ENCODE measurements at regions of chr11 and their contacts with region 1.

Region 1: GRCh38 chr11:76761718-76762355 is 21.3 kb upstream of the TSKU start:
- DNase-seq: no peak
- ATAC-seq: no peak
- H3K4me3 ChIP-seq: no peak overlapping the region
- H3K4me3 Mint-ChIP-seq: no peak overlapping the region
- H3K27ac ChIP-seq: no peak overlapping the region
- H3K27ac Mint-ChIP-seq: no peak overlapping the region
- H3K4me1 ChIP-seq: peaks cover 0 to 3% of the 10 kb centered on the region in 2 experiments
- H3K4me1 Mint-ChIP-seq: peaks cover 0 to 1% (median under 1%) of the 10 kb centered on the region in 3 donors
- H3K27me3 ChIP-seq: peaks cover 0 to 19% of the 10 kb centered on the region in 2 experiments
- H3K27me3 Mint-ChIP-seq: peaks cover 0 to 3% of the 10 kb centered on the region in 2 donors

Region 2: DNA sequence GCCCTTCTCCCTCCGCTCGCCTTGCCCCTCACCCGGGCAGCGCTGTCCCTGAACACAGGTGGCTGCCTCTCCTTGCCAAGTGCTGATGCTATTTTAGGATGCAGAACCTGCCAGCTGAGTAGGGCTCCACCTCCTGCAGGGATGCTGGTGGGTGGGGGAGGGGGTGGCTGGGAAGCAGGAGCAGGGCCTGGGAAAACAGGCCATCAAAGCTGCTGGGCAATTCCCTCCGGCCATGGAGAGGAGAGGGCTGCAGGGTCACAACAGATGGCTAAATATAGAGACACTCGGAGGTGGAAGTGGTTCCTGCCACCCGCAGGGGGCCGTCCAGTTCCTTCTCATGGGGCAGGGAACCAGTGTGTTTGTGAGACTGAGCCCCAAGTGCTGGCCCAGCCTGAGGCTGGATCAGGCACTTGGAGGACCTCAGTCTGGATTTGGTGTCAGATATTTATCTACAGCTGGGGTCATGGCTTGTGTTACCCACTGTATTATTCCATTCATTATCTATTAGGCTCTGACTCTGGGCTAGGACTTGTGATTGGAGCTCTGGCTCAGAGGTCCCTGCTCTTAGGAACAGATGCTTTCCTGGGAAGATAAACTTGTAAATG is 150.9 kb before region 1 on chr11:
- CTCF ChIA-PET with region 1: no interaction called
- POLR2A ChIA-PET with region 1: no interaction called
- DNase-seq: no peak
- ATAC-seq: no peak
- H3K4me3 ChIP-seq: no peak overlapping the region
- H3K4me3 Mint-ChIP-seq: no peak overlapping the region
- H3K27ac ChIP-seq: no peak overlapping the region
- H3K27ac Mint-ChIP-seq: no peak overlapping the region
- H3K4me1 ChIP-seq: no peaks in the 10 kb centered on the region
- H3K4me1 Mint-ChIP-seq: no peaks in the 10 kb centered on the region
- H3K27me3 ChIP-seq: peaks cover 0 to 18% of the 10 kb centered on the region in 2 experiments
- H3K27me3 Mint-ChIP-seq: peaks cover 0 to 2% of the 10 kb centered on the region in 2 donors

Region 3: DNA sequence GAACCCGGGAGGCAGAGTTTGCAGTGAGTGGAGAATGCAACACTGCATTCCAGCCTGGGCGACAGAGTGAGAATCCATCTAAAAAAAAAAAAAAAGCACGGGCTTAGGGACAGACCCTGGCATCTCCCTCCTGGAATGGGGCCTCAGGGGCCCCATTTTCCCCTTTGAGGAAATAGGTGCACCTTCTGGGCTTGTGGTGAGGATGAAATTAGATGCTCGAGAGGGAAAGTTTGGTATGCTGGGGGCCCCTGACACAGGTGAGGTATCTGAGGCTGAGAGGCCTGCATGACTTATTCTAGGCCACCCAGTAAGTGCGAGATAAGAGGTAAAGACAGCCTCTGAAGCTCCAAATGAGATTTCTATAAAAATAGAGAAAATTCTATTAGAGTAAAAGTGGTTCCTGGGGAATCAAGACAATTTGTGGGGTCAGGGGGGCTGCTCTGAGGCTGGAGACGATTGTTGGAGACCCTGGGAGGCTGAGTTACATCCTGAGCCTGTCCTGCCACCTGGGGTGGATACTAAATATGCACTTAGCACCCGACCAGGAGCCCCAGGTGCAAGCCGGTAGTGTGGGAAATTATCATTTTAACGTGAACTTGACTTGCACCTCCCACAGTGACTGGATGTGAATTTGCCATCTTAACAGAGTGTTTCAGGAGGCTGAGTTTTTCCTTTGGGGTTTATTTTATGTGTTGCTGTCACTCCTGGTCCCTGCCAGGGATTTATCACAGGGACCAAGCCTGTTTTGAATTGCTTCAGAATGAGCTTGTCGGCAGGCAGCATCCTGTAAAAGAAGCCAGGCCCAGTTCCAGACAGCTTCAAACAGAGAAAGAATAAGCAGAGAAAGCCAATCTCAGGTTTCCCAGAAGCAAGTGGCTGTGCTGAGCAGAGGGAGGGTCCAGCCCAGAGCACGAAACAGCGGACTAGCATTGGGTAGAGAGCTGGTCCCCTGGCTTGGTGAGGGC is 27.1 kb before region 1 on chr11:
- CTCF ChIA-PET with region 1: no interaction called
- POLR2A ChIA-PET with region 1: no interaction called
- DNase-seq: no peak
- ATAC-seq: no peak
- H3K4me3 ChIP-seq: no peak overlapping the region
- H3K4me3 Mint-ChIP-seq: no peak overlapping the region
- H3K27ac ChIP-seq: no peak overlapping the region
- H3K27ac Mint-ChIP-seq: no peak overlapping the region
- H3K4me1 ChIP-seq: no peaks in the 10 kb centered on the region
- H3K4me1 Mint-ChIP-seq: no peaks in the 10 kb centered on the region
- H3K27me3 ChIP-seq: peaks cover 0 to 35% of the 10 kb centered on the region in 2 experiments
- H3K27me3 Mint-ChIP-seq: peaks cover 2 to 4% of the 10 kb centered on the region in 2 donors

Region 4: GRCh38 chr11:76807206-76807875 is 45.5 kb after region 1 on chr11:
- CTCF ChIA-PET with region 1: no interaction called
- POLR2A ChIA-PET with region 1: no interaction called
- DNase-seq: peak in 33 of 35 experiments; percentile 23 to 78 (median 53)
- ATAC-seq: peak; percentile 46 to 65 (median 60)
- H3K4me3 ChIP-seq: no peak overlapping the region
- H3K4me3 Mint-ChIP-seq: no peak overlapping the region
- H3K27ac ChIP-seq: no peak overlapping the region
- H3K27ac Mint-ChIP-seq: no peak overlapping the region
- H3K4me1 ChIP-seq: peaks cover 13 to 32% of the 10 kb centered on the region in 2 experiments
- H3K4me1 Mint-ChIP-seq: peaks cover 26 to 34% (median 30%) of the 10 kb centered on the region in 3 donors
- H3K27me3 ChIP-seq: peaks cover 0 to 37% of the 10 kb centered on the region in 2 experiments
- H3K27me3 Mint-ChIP-seq: peaks cover 4 to 34% of the 10 kb centered on the region in 2 donors

Region 5: DNA sequence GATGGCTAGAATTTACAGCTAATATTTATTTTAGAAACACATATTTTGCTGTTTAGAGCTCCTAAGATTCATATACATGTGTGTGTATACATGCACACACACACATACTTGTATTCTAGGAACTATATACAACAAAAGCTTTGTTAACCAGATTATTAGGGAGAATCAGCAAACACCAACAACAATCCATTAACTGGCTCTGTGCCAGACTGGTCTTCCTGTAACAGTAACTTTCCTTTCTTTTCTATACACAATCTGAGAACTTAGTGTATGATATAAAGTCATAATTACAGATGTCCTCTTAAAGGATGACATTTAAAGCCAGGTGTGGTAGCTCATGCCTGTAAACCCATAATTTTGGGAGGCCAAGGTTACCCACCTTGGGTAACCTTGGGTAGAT is 925.2 kb after region 1 on chr11:
- CTCF ChIA-PET with region 1: interaction called in 1 of 2 experiments, 11 read pairs
- POLR2A ChIA-PET with region 1: no interaction called
- DNase-seq: no peak
- ATAC-seq: no peak
- H3K4me3 ChIP-seq: no peak overlapping the region
- H3K4me3 Mint-ChIP-seq: no peak overlapping the region
- H3K27ac ChIP-seq: no peak overlapping the region
- H3K27ac Mint-ChIP-seq: no peak overlapping the region
- H3K4me1 ChIP-seq: no peaks in the 10 kb centered on the region
- H3K4me1 Mint-ChIP-seq: no peaks in the 10 kb centered on the region
- H3K27me3 ChIP-seq: no peaks in the 10 kb centered on the region
- H3K27me3 Mint-ChIP-seq: no peaks in the 10 kb centered on the region

Measured in T-cell (primary cell).